ENCODE measurements at regions of chr14 and their contacts with region 1.

Region 1: DNA sequence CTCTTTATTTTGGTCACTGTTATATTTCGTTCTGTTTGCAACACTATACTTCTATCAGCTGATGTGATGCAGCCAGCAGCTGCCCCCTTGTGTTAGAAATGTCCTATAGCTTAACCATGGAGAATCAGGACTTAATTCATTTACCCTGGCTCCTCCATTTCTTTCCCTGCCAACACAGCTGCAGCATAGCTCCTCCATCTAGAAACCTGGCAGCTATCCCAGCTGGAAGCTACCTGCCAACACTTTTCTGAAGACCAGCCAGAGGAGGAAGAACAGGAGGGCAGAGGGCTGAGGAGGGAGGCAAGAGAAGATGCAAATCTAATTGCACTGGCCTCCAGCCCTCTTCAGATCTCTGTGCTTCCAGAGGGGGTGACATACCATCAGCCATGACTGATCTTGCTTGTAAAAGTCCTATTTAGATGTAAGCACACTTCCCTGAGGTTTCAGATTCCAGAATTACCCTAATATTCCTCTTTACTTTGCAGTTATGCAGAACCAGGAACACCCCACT is 156.8 kb upstream of the TMEM260 start:
- DNase-seq: peak in 4 of 5 donors; percentile 45 to 57 (median 48)
- ATAC-seq: peak; percentile 69 to 94 (median 88)
- H3K4me3 ChIP-seq: no peak overlapping the region
- H3K27ac ChIP-seq: no peak overlapping the region
- H3K4me1 ChIP-seq: peaks cover 0 to 20% (median 0%) of the 10 kb centered on the region in 12 donors
- H3K27me3 ChIP-seq: no peaks in the 10 kb centered on the region
- CTCF ChIP-seq: peak; percentile 56 to 80 (median 66)
- POLR2A ChIP-seq: no peak

Region 2: DNA sequence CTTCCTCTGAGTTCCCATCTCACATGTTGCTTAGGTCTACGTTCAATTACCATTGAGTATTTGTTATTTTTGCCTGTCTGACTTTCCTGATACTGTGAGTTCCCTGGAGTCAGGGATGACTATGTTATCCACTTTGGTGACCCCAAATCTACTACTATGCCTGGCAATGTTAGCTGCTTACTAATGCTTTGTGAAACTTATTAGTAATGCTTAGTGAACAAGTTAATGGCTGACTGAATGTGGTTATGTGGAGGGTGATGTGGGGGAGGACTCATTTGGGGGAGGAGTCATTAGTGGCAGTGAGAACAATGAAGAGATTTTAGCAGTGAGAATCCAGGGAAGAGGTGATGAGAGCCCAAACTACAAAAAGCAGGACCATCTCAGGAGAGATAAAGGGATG is 721.1 kb before region 1 on chr14:
- intact Hi-C with region 1: loop called in 7 of 10 experiments (anchors 5 to 10 kb)
- DNase-seq: no peak
- ATAC-seq: no peak
- H3K4me3 ChIP-seq: no peak overlapping the region
- H3K27ac ChIP-seq: no peak overlapping the region
- H3K4me1 ChIP-seq: no peaks in the 10 kb centered on the region
- H3K27me3 ChIP-seq: no peaks in the 10 kb centered on the region
- CTCF ChIP-seq: no peak
- POLR2A ChIP-seq: no peak

Region 3: DNA sequence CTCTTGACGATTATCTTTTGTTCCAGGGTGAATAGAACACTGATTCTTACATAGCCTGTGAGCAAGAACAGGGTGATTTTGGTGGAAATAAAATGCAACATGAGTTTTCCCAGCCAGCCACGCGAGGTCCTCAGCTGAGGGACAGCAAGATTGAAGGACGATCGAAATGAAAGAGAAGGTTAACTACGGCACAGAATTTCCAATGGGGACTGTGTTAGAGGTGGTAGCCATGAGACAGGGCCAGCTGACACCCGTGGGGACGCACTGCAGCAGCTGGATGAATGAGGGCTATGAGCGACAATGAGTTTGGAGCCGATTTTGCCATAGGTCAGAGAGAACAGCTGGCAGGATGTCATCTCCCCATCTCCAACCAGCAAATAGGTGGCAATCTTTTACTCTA is 548.0 kb before region 1 on chr14:
- intact Hi-C with region 1: no loop called
- DNase-seq: no peak
- ATAC-seq: no peak
- H3K4me3 ChIP-seq: peak overlapping the region in 4 of 12 donors; percentile 17 to 43 (median 24)
- H3K27ac ChIP-seq: no peak overlapping the region
- H3K4me1 ChIP-seq: peaks cover 0 to 11% (median 2%) of the 10 kb centered on the region in 12 donors
- H3K27me3 ChIP-seq: peaks cover 0 to 6% (median 0%) of the 10 kb centered on the region in 9 donors
- CTCF ChIP-seq: peak in 1 of 12 donors; percentile 25
- POLR2A ChIP-seq: no peak